Dorsolateral prefrontal cortex (tissue), 120 donors: ENCODE measurements at regions of chr4 and their contacts with region 1.

Region 1: DNA sequence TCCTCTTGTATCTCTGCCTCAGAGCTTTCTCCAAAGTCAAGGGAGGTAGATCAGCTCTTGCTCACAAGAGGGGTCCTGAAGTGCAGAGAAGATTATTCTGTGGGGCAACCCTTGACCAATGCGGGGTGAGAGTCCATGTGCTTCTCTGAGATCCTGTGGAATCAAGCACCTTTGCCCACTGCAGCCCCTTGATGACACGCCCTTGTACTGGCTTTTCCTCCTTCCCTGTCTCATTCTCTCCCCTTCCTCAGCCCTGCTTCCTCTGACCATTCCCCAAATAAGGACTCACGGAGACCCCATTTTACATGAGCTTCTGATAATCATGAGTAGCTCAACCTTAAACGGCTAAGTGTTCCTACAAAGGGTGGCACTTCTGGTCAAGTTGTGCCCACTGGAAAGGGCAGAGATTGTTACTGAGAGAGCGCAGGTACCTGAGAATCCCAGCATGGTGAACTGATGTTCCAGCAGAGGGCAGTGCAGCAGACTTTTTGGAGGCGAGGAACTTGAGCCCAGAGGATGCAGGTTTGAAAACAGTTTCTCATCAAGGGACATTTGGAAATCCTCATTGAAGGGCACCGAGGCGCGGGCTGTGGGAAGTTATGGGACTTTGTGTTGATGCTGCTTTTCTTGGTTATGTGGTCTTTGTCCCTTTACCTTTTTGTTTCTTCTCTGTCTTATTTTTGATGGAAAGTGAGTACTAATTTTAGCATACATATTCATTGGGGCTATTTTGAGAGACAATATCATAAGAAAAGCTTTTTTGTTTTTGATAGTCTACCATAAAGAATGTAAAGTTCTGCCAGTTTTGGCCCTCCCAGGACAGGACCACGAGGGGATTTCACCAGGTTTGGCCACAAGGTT is 201.3 kb downstream of the RBM46 start:
- DNase-seq: peak; percentile 15 to 72 (median 56)
- H3K4me3 ChIP-seq: no peak overlapping the region
- H3K27ac ChIP-seq: no peak overlapping the region
- H3K27me3 ChIP-seq: no peaks in the 10 kb centered on the region
- CTCF ChIP-seq: peak in 55 of 56 donors; percentile 28 to 84 (median 67)

Region 2: DNA sequence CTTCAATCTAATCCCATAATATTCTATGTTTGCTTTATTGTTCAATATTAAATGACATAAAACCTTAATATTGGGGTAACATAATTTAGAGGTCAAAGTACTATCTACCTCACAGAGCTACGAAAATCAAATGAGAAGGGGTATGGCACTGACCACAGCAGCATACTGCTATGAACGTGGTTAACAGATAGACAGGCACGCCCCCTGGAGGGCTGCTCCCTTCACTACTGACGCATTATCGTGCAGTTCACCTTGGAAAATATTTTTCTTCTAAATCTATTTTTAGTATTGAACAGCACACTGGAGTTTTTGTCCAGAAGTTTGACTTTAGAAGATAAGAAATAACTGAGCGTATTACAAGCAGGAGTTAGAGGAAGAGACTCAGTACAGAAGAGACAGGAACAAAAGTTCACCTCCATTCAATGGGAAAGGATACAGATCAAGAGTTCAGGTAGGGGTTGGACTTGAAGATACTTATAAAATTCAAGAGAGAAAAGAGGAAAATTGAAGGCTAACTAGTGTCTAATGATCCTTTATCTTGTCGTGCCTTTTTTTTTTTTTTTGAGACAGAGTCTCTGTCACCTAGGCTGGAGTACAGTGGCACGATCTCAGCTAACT is 371.6 kb after region 1 on chr4:
- intact Hi-C with region 1: loop called (anchors 5 to 10 kb)
- DNase-seq: peak in 9 of 10 donors; percentile 7 to 77 (median 60)
- H3K4me3 ChIP-seq: no peak overlapping the region
- H3K27ac ChIP-seq: no peak overlapping the region
- H3K27me3 ChIP-seq: no peaks in the 10 kb centered on the region
- CTCF ChIP-seq: peak; percentile 43 to 80 (median 67)

Region 3: GRCh38 chr4:155371432-155372043 is 389.1 kb after region 1 on chr4:
- intact Hi-C with region 1: loop called in 1 of 2 experiments (anchors 5 kb)
- DNase-seq: no peak
- H3K4me3 ChIP-seq: no peak overlapping the region
- H3K27ac ChIP-seq: no peak overlapping the region
- H3K27me3 ChIP-seq: no peaks in the 10 kb centered on the region
- CTCF ChIP-seq: peak; percentile 31 to 75 (median 54)